T-cell (primary cell): ENCODE measurements at regions of chrX and their contacts with region 1.

Region 1: GRCh38 chrX:34987646-34988045 is 45.0 kb downstream of the FAM47B start:
- DNase-seq: no peak
- ATAC-seq: no peak
- H3K4me3 ChIP-seq: no peak overlapping the region
- H3K4me3 Mint-ChIP-seq: no peak overlapping the region
- H3K27ac ChIP-seq: no peak overlapping the region
- H3K27ac Mint-ChIP-seq: no peak overlapping the region
- H3K4me1 ChIP-seq: no peaks in the 10 kb centered on the region
- H3K4me1 Mint-ChIP-seq: no peaks in the 10 kb centered on the region
- H3K27me3 ChIP-seq: no peaks in the 10 kb centered on the region
- H3K27me3 Mint-ChIP-seq: no peaks in the 10 kb centered on the region

Region 2: DNA sequence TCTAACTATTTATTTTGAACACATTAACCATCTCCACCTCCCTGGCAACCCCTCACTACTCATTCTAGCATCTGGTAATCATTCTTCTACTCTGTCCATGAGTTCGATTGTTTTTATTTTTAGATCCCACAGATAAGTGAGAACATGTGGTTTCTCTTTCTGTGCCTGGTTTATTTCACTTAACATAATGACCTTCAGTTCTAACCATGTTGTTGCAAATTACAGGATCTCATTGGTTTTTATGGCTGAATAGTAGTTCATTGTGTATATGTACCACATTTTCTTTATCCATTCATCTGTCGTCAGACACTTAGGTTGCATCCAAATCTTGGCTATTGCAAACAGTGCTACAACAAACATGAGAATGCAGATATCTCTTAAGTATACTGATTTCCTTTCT is 78.5 kb before region 1 on chrX:
- CTCF ChIA-PET with region 1: no interaction called
- POLR2A ChIA-PET with region 1: no interaction called
- DNase-seq: no peak
- ATAC-seq: no peak
- H3K4me3 ChIP-seq: no peak overlapping the region
- H3K4me3 Mint-ChIP-seq: no peak overlapping the region
- H3K27ac ChIP-seq: no peak overlapping the region
- H3K27ac Mint-ChIP-seq: no peak overlapping the region
- H3K4me1 ChIP-seq: no peaks in the 10 kb centered on the region
- H3K4me1 Mint-ChIP-seq: no peaks in the 10 kb centered on the region
- H3K27me3 ChIP-seq: no peaks in the 10 kb centered on the region
- H3K27me3 Mint-ChIP-seq: peaks cover 0 to 3% of the 10 kb centered on the region in 2 donors

Region 3: GRCh38 chrX:34999702-35000101 is 12.1 kb after region 1 on chrX:
- CTCF ChIA-PET with region 1: interaction called in 1 of 2 experiments, 12 read pairs
- POLR2A ChIA-PET with region 1: interaction called in 1 of 2 experiments, 3 read pairs
- DNase-seq: no peak
- ATAC-seq: no peak
- H3K4me3 ChIP-seq: no peak overlapping the region
- H3K4me3 Mint-ChIP-seq: no peak overlapping the region
- H3K27ac ChIP-seq: no peak overlapping the region
- H3K27ac Mint-ChIP-seq: no peak overlapping the region
- H3K4me1 ChIP-seq: no peaks in the 10 kb centered on the region
- H3K4me1 Mint-ChIP-seq: no peaks in the 10 kb centered on the region
- H3K27me3 ChIP-seq: no peaks in the 10 kb centered on the region
- H3K27me3 Mint-ChIP-seq: peaks cover 0 to 3% of the 10 kb centered on the region in 2 donors